Mammary epithelial cell (primary cell): ENCODE measurements at regions of chr9 and their contacts with region 1.

Region 1: DNA sequence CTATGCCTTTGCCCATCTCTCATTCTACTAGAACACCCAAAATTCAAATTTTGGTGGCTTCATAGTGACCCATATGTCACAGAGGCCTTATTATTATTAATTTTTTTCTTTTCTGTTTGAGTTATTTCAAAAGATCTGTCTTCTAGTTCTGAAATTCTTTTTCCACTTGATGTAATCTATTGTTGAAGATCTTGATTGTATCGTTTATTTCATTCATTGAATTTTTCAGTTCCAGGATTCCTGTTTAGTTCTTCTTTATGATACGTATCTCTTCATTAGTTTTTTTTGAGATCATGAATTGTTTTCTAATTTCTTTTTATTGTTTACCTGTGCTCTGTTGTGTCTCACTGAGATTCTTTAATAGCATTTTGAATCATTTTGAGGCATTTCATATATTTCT is 24.6 kb upstream of the APBA1 start:
- DNase-seq: no peak
- H3K4me3 ChIP-seq: no peak overlapping the region
- H3K27ac ChIP-seq: no peak overlapping the region
- H3K4me1 ChIP-seq: no peaks in the 10 kb centered on the region
- H3K27me3 ChIP-seq: no peaks in the 10 kb centered on the region
- CTCF ChIP-seq: no peak

Region 2: GRCh38 chr9:69645488-69645887 is 51.3 kb before region 1 on chr9:
- CTCF ChIA-PET with region 1: no interaction called
- dilution Hi-C with region 1: no loop called
- in situ Hi-C with region 1: no loop called
- intact Hi-C with region 1: loop called (anchors 10 kb)
- DNase-seq: peak; percentile 48
- H3K4me3 ChIP-seq: peak overlapping the region in 1 of 3 experiments; percentile 29
- H3K27ac ChIP-seq: no peak overlapping the region
- H3K4me1 ChIP-seq: peaks cover 5% of the 10 kb centered on the region
- H3K27me3 ChIP-seq: peaks cover 2% of the 10 kb centered on the region
- CTCF ChIP-seq: no peak